ENCODE measurements at regions of chr7 and their contacts with region 1.

Region 1: DNA sequence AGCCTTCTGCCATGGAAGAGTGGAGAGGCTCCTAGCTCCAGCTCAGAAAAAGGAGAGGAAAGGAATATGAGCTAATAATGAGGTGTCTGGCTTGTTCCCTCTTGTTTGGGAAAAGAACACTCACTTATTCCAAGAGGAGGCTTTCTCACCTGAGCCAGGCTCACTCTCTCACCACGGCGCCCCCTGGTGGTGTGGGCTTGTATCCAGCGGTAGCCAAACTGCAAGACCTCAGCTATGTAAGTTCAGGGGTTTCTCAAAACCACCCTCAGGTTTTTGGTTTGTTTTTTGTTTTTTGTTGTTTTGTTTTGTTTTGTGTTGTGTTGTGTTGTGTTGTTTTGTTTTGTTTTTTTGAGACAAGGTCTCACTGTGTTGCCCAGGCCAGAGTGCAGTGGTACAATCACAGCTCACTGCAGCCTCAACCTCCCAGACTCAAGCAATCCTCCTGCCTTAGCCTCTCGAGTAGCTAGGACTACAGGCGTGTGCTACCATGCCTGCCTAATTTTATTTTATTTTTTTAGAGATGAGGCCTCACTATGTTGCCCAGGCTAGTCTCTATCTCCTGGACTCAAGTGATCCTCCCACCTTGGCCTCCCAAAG is 124.0 kb downstream of the TMEM130 start:
- DNase-seq: peak; percentile 47
- ATAC-seq: no peak

Region 2: GRCh38 chr7:98294796-98295382 is 450.9 kb before region 1 on chr7:
- intact Hi-C with region 1: loop called in 1 of 2 experiments (anchors 10 kb)
- DNase-seq: peak; percentile 45
- ATAC-seq: peak; percentile 65 to 89

Region 3: DNA sequence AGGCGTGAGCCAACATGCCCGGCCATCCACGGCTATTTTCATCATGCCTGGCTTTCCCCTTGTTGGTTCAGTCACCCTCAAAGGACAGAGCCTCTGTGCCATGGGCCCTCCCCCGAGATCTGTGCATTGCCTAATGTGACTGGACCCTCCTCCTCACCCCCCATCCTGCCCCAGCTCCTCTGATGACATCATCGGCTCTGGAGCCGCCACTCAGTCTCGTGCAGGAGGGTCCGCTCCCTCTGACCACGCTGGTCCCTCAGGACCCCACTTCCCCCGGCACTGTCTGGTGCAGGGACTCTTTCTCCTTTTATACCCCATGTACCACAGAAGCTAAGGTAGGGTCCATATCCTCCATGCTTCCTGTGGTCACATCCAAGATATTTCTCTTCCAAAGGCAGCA is 311.7 kb before region 1 on chr7:
- intact Hi-C with region 1: loop called (anchors 5 kb)
- DNase-seq: no peak
- ATAC-seq: no peak